Naive thymus-derived CD4-positive, alpha-beta T cell (primary cell): ENCODE measurements at regions of chr4 and their contacts with region 1.

Region 1: DNA sequence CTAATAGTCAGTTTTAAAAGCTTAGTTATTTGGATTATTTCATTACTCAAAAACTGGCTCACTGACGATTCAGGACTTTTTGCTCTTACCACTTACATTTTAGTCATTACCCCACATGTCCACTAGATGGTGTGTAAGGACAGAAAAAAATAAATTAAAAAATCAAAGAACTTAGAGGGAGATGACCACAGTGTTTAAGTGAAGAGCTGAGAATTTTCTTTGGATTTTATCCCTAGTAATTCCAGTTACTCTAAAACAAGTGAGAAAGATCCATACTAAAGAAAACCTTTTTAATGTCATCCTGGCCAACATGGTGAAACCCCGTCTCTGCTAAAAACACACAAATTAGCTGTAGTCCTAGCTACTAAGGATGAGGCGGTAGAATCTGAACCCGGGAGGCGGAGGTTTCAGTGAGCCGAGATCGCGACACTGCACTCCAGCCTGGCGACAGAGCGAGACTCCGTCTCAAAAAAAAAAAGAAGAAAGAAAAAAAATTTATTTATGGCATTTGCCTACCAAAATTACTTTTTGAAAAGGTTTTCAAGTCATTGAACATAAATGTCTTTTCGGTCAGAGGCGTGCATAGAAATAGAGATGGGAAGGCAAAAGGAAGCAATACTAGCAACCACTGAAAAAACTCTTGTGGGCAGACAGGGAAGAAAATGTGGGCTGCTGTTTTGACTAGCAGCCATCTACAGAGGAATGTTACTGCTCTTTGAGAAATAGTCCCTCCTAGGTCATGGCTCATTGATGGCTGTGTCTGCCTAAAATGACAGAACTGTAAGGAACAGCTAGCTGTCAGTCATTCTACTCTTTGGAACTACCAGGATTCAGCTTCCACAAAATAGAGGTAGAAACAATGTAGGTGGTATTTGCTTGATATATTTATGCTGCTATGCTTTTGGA is 26.6 kb upstream of the TMPRSS11B start:
- DNase-seq: peak in 6 of 9 donors; percentile 11 to 53 (median 40)
- ATAC-seq: peak; percentile 75
- H3K4me3 ChIP-seq: no peak overlapping the region
- H3K4me3 Mint-ChIP-seq: peak overlapping the region in 9 of 10 donors; percentile 18 to 57 (median 43)
- H3K27ac ChIP-seq: no peak overlapping the region
- H3K27ac Mint-ChIP-seq: no peak overlapping the region
- H3K4me1 ChIP-seq: no peaks in the 10 kb centered on the region
- H3K4me1 Mint-ChIP-seq: peaks cover 0 to 12% (median 0%) of the 10 kb centered on the region in 7 donors
- H3K27me3 ChIP-seq: no peaks in the 10 kb centered on the region
- H3K27me3 Mint-ChIP-seq: peaks cover 0 to 16% (median 12%) of the 10 kb centered on the region in 5 donors

Region 2: GRCh38 chr4:68249434-68249833 is 22.7 kb before region 1 on chr4:
- CTCF ChIA-PET with region 1: no interaction called
- POLR2A ChIA-PET with region 1: no interaction called
- intact Hi-C with region 1: no loop called
- DNase-seq: no peak
- ATAC-seq: no peak
- H3K4me3 ChIP-seq: no peak overlapping the region
- H3K4me3 Mint-ChIP-seq: peak overlapping the region in 1 of 10 donors; percentile 11
- H3K27ac ChIP-seq: no peak overlapping the region
- H3K27ac Mint-ChIP-seq: peak overlapping the region in 1 of 9 donors; percentile 66
- H3K4me1 ChIP-seq: no peaks in the 10 kb centered on the region
- H3K4me1 Mint-ChIP-seq: peaks cover 0 to 6% (median 0%) of the 10 kb centered on the region in 7 donors
- H3K27me3 ChIP-seq: peaks cover 0 to 4% of the 10 kb centered on the region in 2 donors
- H3K27me3 Mint-ChIP-seq: peaks cover 0 to 18% (median 12%) of the 10 kb centered on the region in 5 donors

Region 3: DNA sequence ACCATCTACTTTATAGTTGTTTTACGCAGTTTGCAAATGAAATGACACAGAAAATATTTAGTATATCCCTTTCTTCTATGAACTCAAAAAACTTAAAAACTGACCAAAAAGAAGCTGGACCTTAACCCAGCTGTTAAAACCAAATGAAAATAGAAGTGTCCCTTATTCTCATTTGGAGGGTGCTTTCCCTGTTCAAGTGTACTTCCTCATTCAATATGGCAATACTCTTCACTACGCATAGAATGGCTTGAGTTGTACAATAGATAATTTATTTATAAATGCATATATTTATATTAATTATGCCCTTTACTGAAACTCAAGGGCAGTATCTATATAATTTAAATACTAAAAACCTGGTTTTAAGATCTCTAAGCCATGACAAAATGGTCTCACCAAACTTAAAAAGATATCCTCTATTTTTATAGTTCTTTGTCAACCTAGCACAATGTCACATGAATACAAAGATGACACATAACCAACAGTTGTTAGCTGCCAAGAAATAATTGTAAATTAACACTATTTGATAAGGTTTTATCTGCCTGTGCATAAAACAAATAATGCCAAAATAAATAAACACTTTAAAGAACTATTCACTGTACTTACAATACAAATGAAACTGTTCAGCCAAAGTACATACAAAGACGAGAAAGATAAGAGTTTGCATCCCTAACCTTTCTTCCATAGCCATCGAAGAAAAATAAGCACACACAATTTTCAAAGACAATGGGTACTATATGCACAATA is 52.6 kb after region 1 on chr4:
- CTCF ChIA-PET with region 1: no interaction called
- POLR2A ChIA-PET with region 1: no interaction called
- intact Hi-C with region 1: no loop called
- DNase-seq: no peak
- ATAC-seq: no peak
- H3K4me3 ChIP-seq: no peak overlapping the region
- H3K4me3 Mint-ChIP-seq: no peak overlapping the region
- H3K27ac ChIP-seq: no peak overlapping the region
- H3K27ac Mint-ChIP-seq: peak overlapping the region in 4 of 9 donors; percentile 1 to 55 (median 12)
- H3K4me1 ChIP-seq: no peaks in the 10 kb centered on the region
- H3K4me1 Mint-ChIP-seq: peaks cover 0 to 13% (median 9%) of the 10 kb centered on the region in 7 donors
- H3K27me3 ChIP-seq: no peaks in the 10 kb centered on the region
- H3K27me3 Mint-ChIP-seq: no peaks in the 10 kb centered on the region

Region 4: DNA sequence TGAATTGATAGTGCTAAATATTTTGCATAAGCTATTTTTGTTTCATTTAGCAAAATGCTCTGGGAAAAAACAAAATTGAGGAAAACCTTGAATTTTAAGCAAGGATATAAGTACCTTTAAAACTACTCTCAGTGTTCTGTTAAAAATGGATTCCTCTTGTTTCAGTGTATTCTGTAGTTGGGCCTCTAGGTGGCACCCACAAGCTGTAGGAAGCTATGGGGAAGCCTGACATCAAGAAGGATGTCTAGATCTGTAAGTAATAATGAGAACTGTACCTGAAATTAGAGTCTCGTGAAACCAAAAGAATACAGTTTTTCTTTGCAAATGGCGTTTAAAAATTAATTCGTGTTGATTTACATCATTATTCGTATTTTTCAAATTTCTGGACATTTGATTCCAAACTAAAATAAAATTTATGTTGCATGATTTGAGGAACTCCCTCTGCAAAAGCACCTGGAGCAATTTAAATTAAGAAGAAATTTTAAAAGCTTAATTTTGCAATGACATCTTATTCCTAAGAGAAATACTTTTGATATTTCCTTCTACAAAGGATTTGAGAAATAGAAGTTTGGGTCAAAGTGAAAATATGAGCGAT is 226.4 kb after region 1 on chr4:
- CTCF ChIA-PET with region 1: no interaction called
- POLR2A ChIA-PET with region 1: no interaction called
- intact Hi-C with region 1: loop called (anchors 1 to 2 kb)
- DNase-seq: peak in 8 of 9 donors; percentile 28 to 67 (median 46)
- ATAC-seq: peak; percentile 94
- H3K4me3 ChIP-seq: no peak overlapping the region
- H3K4me3 Mint-ChIP-seq: no peak overlapping the region
- H3K27ac ChIP-seq: no peak overlapping the region
- H3K27ac Mint-ChIP-seq: no peak overlapping the region
- H3K4me1 ChIP-seq: no peaks in the 10 kb centered on the region
- H3K4me1 Mint-ChIP-seq: peaks cover 4 to 22% (median 11%) of the 10 kb centered on the region in 7 donors
- H3K27me3 ChIP-seq: no peaks in the 10 kb centered on the region
- H3K27me3 Mint-ChIP-seq: peaks cover 0 to 4% (median 0%) of the 10 kb centered on the region in 5 donors